ENCODE measurements at regions of chr11 and their contacts with region 1.

Region 1: GRCh38 chr11:72030472-72031045 is 31.9 kb downstream of the IL18BP start:
- DNase-seq: no peak
- H3K4me3 ChIP-seq: no peak overlapping the region
- H3K27ac ChIP-seq: no peak overlapping the region
- H3K4me1 ChIP-seq: no peaks in the 10 kb centered on the region
- H3K27me3 ChIP-seq: no peaks in the 10 kb centered on the region
- CTCF ChIP-seq: no peak

Region 2: DNA sequence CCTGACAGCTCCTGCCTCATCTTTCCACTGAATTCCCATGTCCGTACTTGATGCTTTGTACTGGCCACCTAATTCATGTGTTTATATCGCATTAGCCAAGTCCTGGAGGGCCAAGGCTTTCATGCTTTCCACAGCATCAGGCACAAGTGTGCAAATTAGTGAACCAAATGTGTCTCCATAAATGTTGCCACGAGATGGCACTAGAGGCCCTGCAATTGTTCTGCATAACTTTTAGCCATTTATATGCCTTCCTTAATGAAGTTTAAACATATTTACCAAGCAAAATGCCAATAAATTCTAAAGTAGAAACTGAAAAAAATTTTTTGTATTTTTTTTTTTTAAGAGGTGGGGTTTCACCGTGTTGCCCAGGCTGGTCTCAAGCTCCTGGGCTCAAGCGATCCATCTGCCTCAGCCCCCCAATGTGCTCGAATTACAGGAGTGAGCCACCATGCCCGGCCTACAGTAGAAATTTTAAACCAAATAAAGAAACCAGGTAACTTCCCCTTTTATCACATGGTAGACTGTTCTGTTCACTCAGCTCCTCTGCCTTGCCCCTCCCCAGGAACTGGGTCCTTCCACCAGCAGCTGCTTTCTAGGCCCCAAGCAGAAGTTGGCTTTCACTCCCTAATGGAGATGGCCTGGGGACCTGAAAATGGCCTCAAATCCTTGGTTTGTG is 52.7 kb before region 1 on chr11:
- CTCF ChIA-PET with region 1: interaction called, 12 read pairs
- POLR2A ChIA-PET with region 1: no interaction called
- intact Hi-C with region 1: no loop called
- DNase-seq: peak; percentile 35 to 40
- H3K4me3 ChIP-seq: no peak overlapping the region
- H3K27ac ChIP-seq: no peak overlapping the region
- H3K4me1 ChIP-seq: no peaks in the 10 kb centered on the region
- H3K27me3 ChIP-seq: no peaks in the 10 kb centered on the region
- CTCF ChIP-seq: peak; percentile 85

Region 3: DNA sequence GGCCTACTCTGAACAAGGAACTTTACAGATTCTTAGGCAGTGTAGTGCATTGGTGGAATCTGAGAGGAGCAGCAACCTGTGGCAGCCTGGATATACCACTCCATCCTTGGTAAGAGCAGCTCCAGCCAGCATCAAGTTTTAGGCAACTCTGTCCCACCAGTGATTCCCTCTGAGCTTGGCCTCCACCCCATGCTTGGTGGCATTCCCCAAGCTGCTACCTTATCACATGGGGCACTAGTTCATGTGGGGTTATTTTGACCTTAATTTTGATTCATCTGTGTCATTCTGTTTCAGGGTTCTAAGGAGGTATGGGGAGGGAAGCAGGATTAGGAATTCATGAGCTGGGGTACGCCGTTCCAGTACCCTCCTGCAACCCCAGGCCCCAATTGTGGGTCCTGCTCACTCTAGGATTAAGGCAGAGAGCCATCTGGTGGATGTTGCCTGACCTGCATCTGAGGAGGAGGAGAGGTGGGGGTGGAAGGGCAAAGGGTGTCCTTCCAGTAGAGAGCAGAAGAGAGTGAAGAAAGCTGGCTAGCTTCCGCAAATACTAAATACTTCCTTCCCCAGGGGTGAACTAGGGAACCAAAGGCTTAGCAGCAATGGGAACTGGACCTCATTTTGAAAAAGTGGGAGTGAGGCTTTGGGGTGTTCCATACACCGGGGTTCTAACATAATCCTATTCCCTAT is 60.6 kb after region 1 on chr11:
- CTCF ChIA-PET with region 1: interaction called, 23 read pairs
- POLR2A ChIA-PET with region 1: no interaction called
- intact Hi-C with region 1: loop called (anchors 1 kb)
- DNase-seq: peak in 1 of 2 experiments; percentile 60
- H3K4me3 ChIP-seq: no peak overlapping the region
- H3K27ac ChIP-seq: 0 out of 2 replicates have a peak overlapping the region, but pooled peaks have one; percentile 8
- H3K4me1 ChIP-seq: no peaks in the 10 kb centered on the region
- H3K27me3 ChIP-seq: no peaks in the 10 kb centered on the region
- CTCF ChIP-seq: peak; percentile 93

Region 4: GRCh38 chr11:72179804-72180396 is 149.3 kb after region 1 on chr11:
- CTCF ChIA-PET with region 1: interaction called, 3 read pairs
- POLR2A ChIA-PET with region 1: no interaction called
- intact Hi-C with region 1: loop called (anchors 1 kb)
- DNase-seq: no peak
- H3K4me3 ChIP-seq: no peak overlapping the region
- H3K27ac ChIP-seq: no peak overlapping the region
- H3K4me1 ChIP-seq: no peaks in the 10 kb centered on the region
- H3K27me3 ChIP-seq: 0 out of 2 replicates have a peak, but pooled peaks cover 3% of the 10 kb centered on the region
- CTCF ChIP-seq: no peak

Region 5: GRCh38 chr11:72413914-72414628 is 383.5 kb after region 1 on chr11:
- CTCF ChIA-PET with region 1: no interaction called
- POLR2A ChIA-PET with region 1: no interaction called
- intact Hi-C with region 1: loop called (anchors 1 kb)
- DNase-seq: peak; percentile 73 to 89
- H3K4me3 ChIP-seq: no peak overlapping the region
- H3K27ac ChIP-seq: no peak overlapping the region
- H3K4me1 ChIP-seq: no peaks in the 10 kb centered on the region
- H3K27me3 ChIP-seq: no peaks in the 10 kb centered on the region
- CTCF ChIP-seq: peak; percentile 96

Region 6: GRCh38 chr11:72573072-72573854 is 542.7 kb after region 1 on chr11:
- CTCF ChIA-PET with region 1: no interaction called
- POLR2A ChIA-PET with region 1: no interaction called
- intact Hi-C with region 1: loop called (anchors 5 kb)
- DNase-seq: peak in 1 of 2 experiments; percentile 54
- H3K4me3 ChIP-seq: no peak overlapping the region
- H3K27ac ChIP-seq: no peak overlapping the region
- H3K4me1 ChIP-seq: peaks cover 50% of the 10 kb centered on the region
- H3K27me3 ChIP-seq: no peaks in the 10 kb centered on the region
- CTCF ChIP-seq: peak; percentile 85

Measured in PC-9 (cell line).